H1 (cell line): ENCODE measurements at regions of chrX and their contacts with region 1.

Region 1: DNA sequence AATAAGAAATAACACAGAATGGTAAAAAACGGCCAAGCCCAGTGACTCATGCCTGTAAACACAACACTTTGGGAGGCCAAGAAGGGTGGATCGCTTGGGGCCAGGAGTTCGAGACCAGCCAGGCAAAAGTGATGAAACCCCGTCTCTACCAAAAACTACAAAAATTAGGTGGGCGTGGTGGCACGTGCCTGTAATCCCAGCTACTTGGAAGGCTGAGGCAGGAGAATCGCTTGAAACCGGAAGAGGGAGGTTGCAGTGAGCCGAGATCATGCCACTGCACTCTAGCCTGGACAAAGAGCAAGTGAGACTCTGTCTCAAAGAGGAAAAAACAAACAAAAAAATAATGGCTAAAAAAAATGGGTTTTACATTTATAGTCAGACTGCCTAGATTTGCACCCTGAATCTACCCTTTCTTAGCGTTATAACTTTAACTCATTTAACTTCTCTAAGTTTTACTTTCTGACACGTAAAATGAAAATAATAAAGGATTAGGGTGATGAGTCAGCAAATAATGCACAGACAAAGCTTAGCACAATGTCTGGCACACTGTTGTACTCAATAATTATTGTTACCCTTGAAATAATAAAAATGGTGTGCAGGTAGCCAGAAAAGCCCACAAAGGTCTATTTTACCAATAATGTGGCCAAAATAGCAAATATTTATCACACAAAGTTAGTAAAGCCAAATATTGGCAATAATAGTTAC is 55.0 kb downstream of the ATP11C start:
- DNase-seq: no peak
- H3K4me3 ChIP-seq: no peak overlapping the region
- H3K27ac ChIP-seq: no peak overlapping the region
- H3K4me1 ChIP-seq: peaks cover 0 to 4% (median 2%) of the 10 kb centered on the region in 4 experiments; a peak in 3 of 7 replicates
- H3K27me3 ChIP-seq: no peaks in the 10 kb centered on the region
- CTCF ChIP-seq: no peak
- EP300 ChIP-seq: no peak
- POLR2A ChIP-seq: no peak
- RAD21 ChIP-seq: no peak

Region 2: GRCh38 chrX:138683600-138683999 is 1194.3 kb before region 1 on chrX:
- CTCF ChIA-PET with region 1: no interaction called
- POLR2A ChIA-PET with region 1: no interaction called
- DNase-seq: no peak
- H3K4me3 ChIP-seq: no peak overlapping the region
- H3K27ac ChIP-seq: no peak overlapping the region
- H3K4me1 ChIP-seq: no peaks in the 10 kb centered on the region
- H3K27me3 ChIP-seq: no peaks in the 10 kb centered on the region
- CTCF ChIP-seq: no peak
- EP300 ChIP-seq: no peak
- POLR2A ChIP-seq: no peak
- RAD21 ChIP-seq: no peak

Region 3: GRCh38 chrX:139862217-139862616 is 15.6 kb before region 1 on chrX:
- CTCF ChIA-PET with region 1: interaction called, 12 read pairs
- POLR2A ChIA-PET with region 1: no interaction called
- DNase-seq: no peak
- H3K4me3 ChIP-seq: no peak overlapping the region
- H3K27ac ChIP-seq: no peak overlapping the region
- H3K4me1 ChIP-seq: peaks cover 0 to 2% (median 0%) of the 10 kb centered on the region in 4 experiments; a peak in 1 of 7 replicates
- H3K27me3 ChIP-seq: no peaks in the 10 kb centered on the region
- CTCF ChIP-seq: peak in 2 of 3 experiments; percentile 32 to 40; a peak in 3 of 4 replicates
- EP300 ChIP-seq: no peak
- POLR2A ChIP-seq: no peak
- RAD21 ChIP-seq: peak; percentile 18 to 34; a peak in 2 of 4 replicates

Region 4: DNA sequence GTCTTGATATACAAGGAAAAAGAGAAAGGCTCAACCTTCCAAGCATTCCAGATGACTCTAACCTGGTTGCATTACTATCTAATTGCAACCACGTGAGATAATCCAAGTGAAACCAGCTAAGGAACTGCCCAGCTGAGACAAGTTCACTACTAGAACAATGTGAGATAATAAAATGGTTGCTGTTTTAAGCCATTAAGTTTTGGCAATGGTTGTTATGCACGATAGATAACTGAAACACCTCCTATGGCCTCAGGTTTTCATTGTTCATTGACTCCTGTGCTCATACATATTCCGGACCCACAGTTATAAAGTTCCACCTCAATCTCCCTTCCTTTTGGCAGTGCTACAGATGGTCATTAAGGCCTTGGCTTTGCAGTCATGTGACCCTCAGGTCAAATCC is 96.6 kb after region 1 on chrX:
- CTCF ChIA-PET with region 1: no interaction called
- POLR2A ChIA-PET with region 1: no interaction called
- DNase-seq: no peak
- H3K4me3 ChIP-seq: no peak overlapping the region
- H3K27ac ChIP-seq: no peak overlapping the region
- H3K4me1 ChIP-seq: no peaks in the 10 kb centered on the region; a peak in 1 of 7 replicates
- H3K27me3 ChIP-seq: no peaks in the 10 kb centered on the region
- CTCF ChIP-seq: no peak
- EP300 ChIP-seq: no peak
- POLR2A ChIP-seq: no peak
- RAD21 ChIP-seq: no peak